Endothelial cell of umbilical vein (primary cell): ENCODE measurements at regions of chr3 and their contacts with region 1.

Region 1: GRCh38 chr3:37546905-37547304 is 314.8 kb upstream of the CTDSPL start:
- DNase-seq: no peak
- H3K4me3 ChIP-seq: no peak overlapping the region
- H3K27ac ChIP-seq: no peak overlapping the region
- H3K4me1 ChIP-seq: no peaks in the 10 kb centered on the region
- H3K27me3 ChIP-seq: peaks cover 0 to 2% of the 10 kb centered on the region in 2 experiments
- CTCF ChIP-seq: no peak
- POLR2A ChIP-seq: no peak

Region 2: DNA sequence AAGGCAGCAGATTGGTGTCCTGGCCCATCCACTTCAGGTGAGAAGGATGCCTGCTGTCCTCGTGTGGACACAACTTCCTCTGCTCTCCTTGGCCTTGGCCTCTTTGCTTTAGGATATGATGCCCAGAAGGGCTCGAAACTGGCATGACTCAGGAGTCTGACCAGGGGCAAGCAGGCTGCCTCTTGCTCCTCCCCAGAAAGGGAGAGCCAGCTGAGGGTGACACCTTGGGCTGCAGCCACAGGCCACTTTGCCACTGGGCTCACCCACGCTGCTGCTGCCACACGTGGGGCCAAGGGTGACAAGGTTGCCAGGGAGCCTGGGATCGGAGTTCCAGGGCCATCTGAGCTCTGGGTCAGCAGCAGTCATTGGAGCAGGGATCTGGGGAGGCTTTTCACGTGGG is 46.9 kb after region 1 on chr3:
- CTCF ChIA-PET with region 1: no interaction called
- POLR2A ChIA-PET with region 1: no interaction called
- dilution Hi-C with region 1: no loop called
- intact Hi-C with region 1: loop called (anchors 1 kb)
- DNase-seq: no peak
- H3K4me3 ChIP-seq: no peak overlapping the region
- H3K27ac ChIP-seq: no peak overlapping the region
- H3K4me1 ChIP-seq: no peaks in the 10 kb centered on the region
- H3K27me3 ChIP-seq: no peaks in the 10 kb centered on the region
- CTCF ChIP-seq: no peak
- POLR2A ChIP-seq: no peak

Region 3: DNA sequence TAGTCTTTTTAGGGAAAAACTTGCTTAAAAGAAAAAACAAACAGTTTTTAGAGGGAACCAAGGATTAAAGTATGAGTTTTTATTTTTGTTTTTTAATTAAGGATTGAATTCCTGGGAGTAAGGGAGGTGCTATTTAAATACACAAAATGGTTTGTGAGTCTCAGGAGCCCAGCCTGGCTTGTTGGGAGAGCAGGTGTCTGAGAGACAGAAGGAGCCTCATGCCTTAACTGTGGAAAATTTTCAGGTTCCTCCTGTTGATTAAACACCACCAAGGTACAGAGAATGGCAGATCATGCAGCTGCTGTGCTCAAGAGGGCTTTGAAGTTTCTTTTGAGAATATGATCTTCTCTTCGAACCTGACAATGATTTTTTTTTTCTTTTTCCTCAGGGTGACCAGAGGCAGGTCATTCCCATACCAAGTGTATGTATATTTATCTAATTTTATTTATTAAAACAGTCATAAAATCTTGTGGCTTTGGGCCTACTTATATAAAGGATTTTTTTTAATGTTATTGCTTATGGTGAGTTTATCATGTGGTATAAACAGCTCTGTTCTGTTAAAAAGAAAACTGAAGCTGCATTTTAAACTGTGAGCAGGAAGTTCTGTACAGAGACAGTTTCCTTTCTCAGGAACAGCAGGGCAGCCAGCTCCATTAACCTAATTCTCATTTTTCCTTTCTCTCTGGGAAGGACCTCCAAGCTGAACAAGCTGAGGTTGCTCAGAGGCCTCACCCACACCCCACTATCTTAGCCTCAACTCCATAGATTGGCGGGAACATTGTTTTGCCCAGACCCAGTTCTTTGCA is 410.0 kb after region 1 on chr3:
- CTCF ChIA-PET with region 1: no interaction called
- POLR2A ChIA-PET with region 1: no interaction called
- dilution Hi-C with region 1: no loop called
- intact Hi-C with region 1: no loop called
- DNase-seq: peak; percentile 84
- H3K4me3 ChIP-seq: no peak overlapping the region
- H3K27ac ChIP-seq: peak overlapping the region; percentile 41
- H3K4me1 ChIP-seq: peaks cover 40% of the 10 kb centered on the region
- H3K27me3 ChIP-seq: no peaks in the 10 kb centered on the region
- CTCF ChIP-seq: no peak
- POLR2A ChIP-seq: no peak

Region 4: GRCh38 chr3:38067508-38068233 is 520.8 kb after region 1 on chr3:
- CTCF ChIA-PET with region 1: no interaction called
- POLR2A ChIA-PET with region 1: no interaction called
- dilution Hi-C with region 1: no loop called
- intact Hi-C with region 1: no loop called
- DNase-seq: no peak
- H3K4me3 ChIP-seq: no peak overlapping the region
- H3K27ac ChIP-seq: no peak overlapping the region
- H3K4me1 ChIP-seq: no peaks in the 10 kb centered on the region
- H3K27me3 ChIP-seq: peaks cover 0 to 2% of the 10 kb centered on the region in 2 experiments
- CTCF ChIP-seq: no peak
- POLR2A ChIP-seq: no peak